CD4-positive, alpha-beta memory T cell (primary cell): ENCODE measurements at regions of chr4 and their contacts with region 1.

Region 1: GRCh38 chr4:102344954-102345794 is at the start of gene SLC39A8:
- DNase-seq: peak; percentile 86 to 95 (median 89)
- H3K4me3 ChIP-seq: peak within 1 kb of the TSS; percentile 80 to 83
- H3K4me3 Mint-ChIP-seq: peak within 1 kb of the TSS; percentile 86 to 95 (median 94)
- H3K27ac ChIP-seq: peak within 1 kb of the TSS; percentile 91
- H3K27ac Mint-ChIP-seq: peak within 1 kb of the TSS; percentile 86 to 99 (median 98)
- H3K4me1 ChIP-seq: peaks cover 47% of the 10 kb centered on the region
- H3K4me1 Mint-ChIP-seq: peaks cover 24 to 56% (median 42%) of the 10 kb centered on the region in 4 donors
- H3K27me3 ChIP-seq: no peaks in the 10 kb centered on the region
- H3K27me3 Mint-ChIP-seq: no peaks in the 10 kb centered on the region
- total RNA-seq, gene SLC39A8: 24.6 to 25.7 TPM

Region 2: GRCh38 chr4:102620697-102621497 is 275.7 kb after region 1 on chr4:
- CTCF ChIA-PET with region 1: no interaction called
- POLR2A ChIA-PET with region 1: no interaction called
- intact Hi-C with region 1: loop called (anchors 2 kb)
- DNase-seq: peak in 2 of 5 donors; percentile 27 to 35
- H3K4me3 ChIP-seq: no peak overlapping the region
- H3K4me3 Mint-ChIP-seq: peak overlapping the region in 1 of 8 donors; percentile 40
- H3K27ac ChIP-seq: no peak overlapping the region
- H3K27ac Mint-ChIP-seq: peak overlapping the region in 5 of 7 donors; percentile 20 to 82 (median 80)
- H3K4me1 ChIP-seq: peaks cover 18% of the 10 kb centered on the region
- H3K4me1 Mint-ChIP-seq: peaks cover 19 to 70% (median 40%) of the 10 kb centered on the region in 4 donors
- H3K27me3 ChIP-seq: no peaks in the 10 kb centered on the region
- H3K27me3 Mint-ChIP-seq: no peaks in the 10 kb centered on the region

Region 3: GRCh38 chr4:102868781-102869568 is 523.8 kb after region 1 on chr4 and contains the start of gene CISD2:
- CTCF ChIA-PET with region 1: no interaction called
- POLR2A ChIA-PET with region 1: interaction called, 14 read pairs
- intact Hi-C with region 1: loop called (anchors 2 kb)
- DNase-seq: peak; percentile 92 to 94 (median 92)
- H3K4me3 ChIP-seq: peak within 1 kb of the TSS; percentile 58 to 74
- H3K4me3 Mint-ChIP-seq: peak within 1 kb of the TSS; percentile 91 to 99 (median 95)
- H3K27ac ChIP-seq: peak within 1 kb of the TSS; percentile 91
- H3K27ac Mint-ChIP-seq: peak within 1 kb of the TSS; percentile 95 to 100 (median 99)
- H3K4me1 ChIP-seq: peaks cover 54% of the 10 kb centered on the region
- H3K4me1 Mint-ChIP-seq: peaks cover 39 to 82% (median 50%) of the 10 kb centered on the region in 4 donors
- H3K27me3 ChIP-seq: no peaks in the 10 kb centered on the region
- H3K27me3 Mint-ChIP-seq: no peaks in the 10 kb centered on the region
- total RNA-seq, gene CISD2: 18.5 to 22.0 TPM

Region 4: GRCh38 chr4:103019308-103020124 is 674.3 kb after region 1 on chr4 and contains the start of gene SLC9B1:
- CTCF ChIA-PET with region 1: interaction called, 3 read pairs
- POLR2A ChIA-PET with region 1: interaction called, 3 read pairs
- intact Hi-C with region 1: loop called (anchors 2 kb)
- DNase-seq: peak; percentile 91 to 94 (median 93)
- H3K4me3 ChIP-seq: peak within 1 kb of the TSS; percentile 11 to 90
- H3K4me3 Mint-ChIP-seq: peak within 1 kb of the TSS; percentile 85 to 98 (median 91)
- H3K27ac ChIP-seq: peak within 1 kb of the TSS; percentile 85
- H3K27ac Mint-ChIP-seq: peak within 1 kb of the TSS in 6 of 7 donors; percentile 97 to 100 (median 99)
- H3K4me1 ChIP-seq: peaks cover 17% of the 10 kb centered on the region
- H3K4me1 Mint-ChIP-seq: peaks cover 10 to 23% (median 19%) of the 10 kb centered on the region in 4 donors
- H3K27me3 ChIP-seq: no peaks in the 10 kb centered on the region
- H3K27me3 Mint-ChIP-seq: no peaks in the 10 kb centered on the region
- total RNA-seq, gene SLC9B1: 3.2 to 5.2 TPM

Region 5: DNA sequence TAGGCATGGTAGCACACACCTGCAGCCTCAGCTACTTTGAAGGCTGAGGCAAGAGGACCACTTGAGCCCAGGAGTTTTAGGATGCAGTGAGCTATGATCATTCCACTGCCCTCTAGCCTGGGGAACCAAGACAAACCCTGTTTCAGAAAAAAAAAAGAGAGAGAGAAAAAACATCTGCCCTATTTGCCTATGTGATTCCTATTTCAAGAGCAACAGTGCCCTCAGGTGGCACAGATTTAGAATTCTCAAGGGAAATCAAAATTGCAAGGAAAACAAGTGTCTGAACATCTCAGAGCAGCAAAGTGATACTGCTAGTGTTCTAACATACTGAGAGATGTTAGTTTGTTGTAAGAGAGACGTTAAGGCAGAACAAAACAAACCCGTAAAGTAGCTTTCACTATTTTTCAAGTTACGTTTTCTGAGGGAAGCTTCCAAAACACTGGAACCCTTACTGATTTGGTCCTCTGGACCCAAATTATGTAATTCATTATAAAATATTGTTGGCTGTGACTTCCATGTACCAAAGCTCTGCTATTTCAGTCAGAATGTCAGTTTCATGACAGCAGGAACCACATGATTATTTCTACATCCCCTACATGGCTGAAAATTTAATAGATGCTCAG is 746.5 kb after region 1 on chr4:
- CTCF ChIA-PET with region 1: no interaction called
- POLR2A ChIA-PET with region 1: no interaction called
- intact Hi-C with region 1: loop called (anchors 2 kb)
- DNase-seq: peak; percentile 51 to 66 (median 59)
- H3K4me3 ChIP-seq: no peak overlapping the region
- H3K4me3 Mint-ChIP-seq: no peak overlapping the region
- H3K27ac ChIP-seq: no peak overlapping the region
- H3K27ac Mint-ChIP-seq: peak overlapping the region in 3 of 7 donors; percentile 37 to 73 (median 60)
- H3K4me1 ChIP-seq: peaks cover 12% of the 10 kb centered on the region
- H3K4me1 Mint-ChIP-seq: peaks cover 6 to 20% (median 10%) of the 10 kb centered on the region in 4 donors
- H3K27me3 ChIP-seq: no peaks in the 10 kb centered on the region
- H3K27me3 Mint-ChIP-seq: no peaks in the 10 kb centered on the region